ENCODE measurements at regions of chr16 and their contacts with region 1.

Region 1: GRCh38 chr16:56681939-56682702 is at the start of gene MT1X:
- DNase-seq: peak; percentile 93 to 99
- H3K4me3 ChIP-seq: peak within 1 kb of the TSS; percentile 92
- CTCF ChIP-seq: no peak
- POLR2A ChIP-seq: peak in 1 of 2 donors; percentile 86
- total RNA-seq, gene MT1X: 1,041 to 3,584 (median 2,610) TPM

Region 2: GRCh38 chr16:56608043-56608875 is 73.9 kb before region 1 on chr16 and contains the start of gene MT2A:
- intact Hi-C with region 1: loop called (anchors 10 kb)
- DNase-seq: peak; percentile 94 to 99
- H3K4me3 ChIP-seq: peak within 1 kb of the TSS; percentile 67
- CTCF ChIP-seq: peak in 1 of 3 donors; percentile 22
- POLR2A ChIP-seq: peak in 1 of 2 donors; percentile 36
- total RNA-seq, gene MT2A: 35.8 to 190 (median 135) TPM

Region 3: DNA sequence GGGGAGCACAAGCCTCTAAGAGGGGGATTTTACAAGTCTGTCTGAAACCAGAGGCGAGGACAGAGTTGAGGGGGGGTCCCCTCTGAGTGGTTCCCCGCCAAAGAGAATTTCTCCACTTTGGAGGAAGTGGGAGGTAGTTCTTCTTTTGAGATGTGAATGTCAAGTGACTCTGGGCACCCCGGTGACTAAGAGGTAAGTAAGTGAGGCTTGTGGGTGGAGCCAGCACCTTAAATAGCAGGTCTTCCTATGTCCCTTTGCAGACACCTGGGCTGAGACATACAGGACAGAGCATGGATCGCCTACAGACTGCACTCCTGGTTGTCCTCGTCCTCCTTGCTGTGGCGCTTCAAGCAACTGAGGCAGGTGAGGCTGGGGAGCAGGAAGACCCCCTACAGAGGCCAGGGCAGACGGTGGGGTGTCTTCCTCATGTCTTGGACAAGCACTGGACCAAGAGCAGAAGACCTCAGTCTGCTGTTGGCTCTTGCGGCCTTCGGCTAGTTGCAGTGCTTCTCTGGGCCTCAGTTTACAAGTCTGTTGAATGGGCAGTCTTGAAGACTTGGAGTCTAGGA is 676.5 kb after region 1 on chr16 and contains the start of gene CCL22:
- intact Hi-C with region 1: no loop called
- DNase-seq: peak in 1 of 2 donors; percentile 82
- H3K4me3 ChIP-seq: no peak within 1 kb of the TSS
- CTCF ChIP-seq: no peak
- POLR2A ChIP-seq: no peak
- total RNA-seq, gene CCL22: 0.99 to 10.1 (median 2.0) TPM